ENCODE measurements at regions of chr19 and their contacts with region 1.

Region 1: DNA sequence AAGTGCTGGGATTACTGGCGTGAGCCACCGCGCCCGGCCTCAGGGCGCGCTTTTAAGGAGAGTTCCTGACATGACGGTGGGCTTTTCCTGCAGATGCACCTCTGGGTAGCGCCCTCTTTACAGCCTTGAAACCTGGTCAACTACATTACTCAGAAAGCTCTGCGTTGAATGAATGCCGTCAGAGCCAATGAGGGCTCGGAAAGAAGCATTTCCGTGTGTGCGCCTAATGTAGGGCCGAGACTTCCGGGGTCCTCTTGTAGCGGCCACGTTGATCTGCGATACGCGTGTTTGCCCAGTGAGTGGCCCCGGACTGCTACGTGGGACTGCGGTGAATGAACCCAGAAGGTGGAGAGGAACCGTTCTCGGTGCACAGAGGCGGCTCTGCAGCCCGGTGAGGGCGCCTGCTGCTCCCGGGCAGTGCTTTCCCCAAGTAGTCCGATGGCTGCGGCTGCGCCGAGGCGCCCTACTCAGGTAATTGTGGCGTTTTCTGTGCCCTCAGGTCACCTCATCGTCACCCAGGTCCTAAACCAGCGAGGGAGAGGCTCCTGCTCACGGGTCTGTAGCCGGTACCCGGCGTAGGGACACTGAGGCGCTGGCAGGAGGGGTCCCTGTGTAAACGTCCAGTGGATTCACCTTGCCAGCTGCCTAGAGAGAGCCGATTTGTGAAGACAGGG is 4.9 kb upstream of the ZNF552 start:
- DNase-seq: peak; percentile 94
- H3K4me3 ChIP-seq: peak overlapping the region; percentile 70 to 81 (median 80)
- H3K27ac ChIP-seq: peak overlapping the region; percentile 76 to 84 (median 78)
- H3K4me1 ChIP-seq: peaks cover 18 to 38% (median 32%) of the 10 kb centered on the region in 4 donors
- H3K27me3 ChIP-seq: no peaks in the 10 kb centered on the region
- CTCF ChIP-seq: peak in 1 of 3 experiments; percentile 29
- EP300 ChIP-seq: no peak
- POLR2A ChIP-seq: no peak

Region 2: GRCh38 chr19:57746580-57747471 is 72.8 kb before region 1 on chr19 and contains the start of gene ZNF776:
- intact Hi-C with region 1: loop called (anchors 10 kb)
- DNase-seq: peak; percentile 93
- H3K4me3 ChIP-seq: peak within 1 kb of the TSS; percentile 80 to 96 (median 86)
- H3K27ac ChIP-seq: peak within 1 kb of the TSS; percentile 84 to 89 (median 89)
- H3K4me1 ChIP-seq: peaks cover 17 to 25% (median 21%) of the 10 kb centered on the region in 4 donors
- H3K27me3 ChIP-seq: no peaks in the 10 kb centered on the region
- CTCF ChIP-seq: peak in 1 of 3 experiments; percentile 8
- EP300 ChIP-seq: no peak
- POLR2A ChIP-seq: no peak
- total RNA-seq, gene ZNF776: 9.8 to 19.1 (median 14.1) TPM